ENCODE measurements at regions of chr9 and their contacts with region 1.

Region 1: DNA sequence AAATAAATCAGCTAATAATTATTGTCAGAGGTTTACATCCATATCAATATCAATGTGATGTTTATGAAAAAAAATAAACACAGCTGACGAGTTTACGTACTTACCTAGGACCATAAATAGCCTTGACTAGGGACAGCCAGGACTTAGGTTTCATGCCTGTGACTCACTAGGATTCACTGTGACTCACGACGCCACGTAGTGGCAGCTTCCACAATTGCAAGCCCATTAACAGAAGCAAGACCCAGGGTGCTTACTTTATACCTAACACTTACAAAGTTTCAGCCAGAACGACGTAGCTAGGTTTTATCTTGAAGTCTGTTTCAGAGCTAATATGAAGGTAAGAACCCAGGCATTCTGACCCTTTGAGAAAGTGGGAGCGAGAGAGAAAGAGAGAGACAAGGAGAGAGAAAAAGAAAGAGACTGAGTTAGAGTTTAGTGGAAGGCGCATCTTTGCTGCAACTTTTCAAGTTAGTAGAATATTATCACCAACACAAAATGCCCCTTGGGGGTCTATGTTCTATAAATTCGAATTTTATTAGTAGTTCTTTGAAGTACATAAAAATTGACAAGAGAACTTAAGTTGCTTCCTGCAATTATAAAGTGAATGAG is 191.2 kb downstream of the GNA14 start:
- DNase-seq: peak; percentile 87 to 90
- ATAC-seq: peak; percentile 81 to 89
- H3K4me3 ChIP-seq: no peak overlapping the region
- H3K27ac ChIP-seq: no peak overlapping the region
- H3K4me1 ChIP-seq: no peaks in the 10 kb centered on the region
- CTCF ChIP-seq: peak; percentile 69
- EP300 ChIP-seq: no peak
- POLR2A ChIP-seq: no peak
- RAD21 ChIP-seq: peak; percentile 38 to 39; a peak in 4 of 5 replicates

Region 2: DNA sequence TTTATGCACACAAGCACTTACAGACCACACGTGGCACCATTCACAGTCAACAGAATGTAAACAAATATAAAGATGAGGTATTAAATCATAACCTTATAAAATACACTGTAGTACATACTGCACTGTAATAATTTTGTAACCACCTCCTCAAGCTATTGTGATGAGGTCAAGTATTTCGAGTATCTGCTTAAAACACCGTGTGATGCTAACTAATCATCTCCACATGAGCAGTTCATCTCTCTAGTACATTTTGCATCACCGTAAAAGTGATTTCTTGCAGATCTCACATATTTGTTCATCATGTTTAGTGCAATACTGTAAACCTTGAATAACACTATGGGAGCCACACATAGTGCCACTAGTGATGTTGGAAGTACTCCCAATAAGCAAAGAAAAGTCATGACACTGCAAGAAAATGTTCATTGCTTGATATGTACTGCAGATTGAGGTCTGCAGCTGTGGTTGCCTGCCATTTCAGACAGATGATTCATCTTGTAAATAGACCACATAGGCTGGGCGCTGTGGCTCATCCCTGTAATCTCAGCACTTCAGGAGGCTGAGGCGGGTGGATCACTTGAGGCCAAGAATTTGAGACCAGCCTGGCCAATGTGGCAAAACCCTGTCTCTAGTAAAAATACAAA is 393.2 kb before region 1 on chr9:
- CTCF ChIA-PET with region 1: no interaction called
- POLR2A ChIA-PET with region 1: no interaction called
- DNase-seq: peak in 1 of 2 experiments; percentile 74
- ATAC-seq: peak; percentile 90 to 97
- H3K4me3 ChIP-seq: no peak overlapping the region
- H3K27ac ChIP-seq: peak overlapping the region; percentile 54 to 56; a peak in 4 of 6 replicates
- H3K4me1 ChIP-seq: peaks cover 11% of the 10 kb centered on the region; the same call in 2 of the 3 replicates
- CTCF ChIP-seq: no peak
- EP300 ChIP-seq: no peak
- POLR2A ChIP-seq: no peak
- RAD21 ChIP-seq: no peak

Region 3: DNA sequence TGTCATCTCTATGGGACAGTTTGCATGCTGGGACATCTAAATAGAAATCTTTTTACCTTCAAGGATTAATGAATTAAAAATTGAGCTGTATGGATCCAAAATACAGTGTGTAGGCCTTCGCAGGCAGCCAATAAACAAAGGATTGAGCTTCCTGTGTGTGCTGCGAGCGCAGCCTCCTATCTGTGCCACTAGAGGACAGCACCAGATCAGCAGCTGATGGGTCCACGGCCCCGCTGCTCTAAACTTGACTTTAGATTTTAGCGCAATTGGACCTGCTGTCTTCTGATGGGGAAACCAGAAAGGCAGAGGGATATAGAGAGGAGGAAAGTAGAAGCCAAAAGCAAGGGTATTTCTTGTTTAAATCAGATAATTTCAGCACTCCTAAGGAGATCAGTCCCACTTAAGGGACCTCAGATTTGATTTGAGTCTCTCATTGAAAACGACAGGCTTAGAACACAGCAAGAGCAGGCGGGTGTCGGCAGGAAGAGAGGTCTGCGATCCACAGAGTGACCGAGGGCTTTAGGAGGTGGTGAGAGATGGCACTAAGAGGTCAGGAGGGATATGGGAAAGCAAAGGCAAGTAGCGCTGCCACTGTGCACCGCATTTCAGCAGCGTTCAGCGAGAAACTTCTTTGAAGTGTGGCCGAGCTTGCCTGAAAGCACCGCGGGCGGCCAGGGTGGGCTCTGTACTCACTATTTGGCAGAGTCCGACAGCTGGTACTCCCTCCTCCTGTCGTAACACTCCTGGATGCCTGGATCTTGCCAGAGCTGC is 23.1 kb before region 1 on chr9:
- CTCF ChIA-PET with region 1: interaction called, 238 read pairs
- POLR2A ChIA-PET with region 1: no interaction called
- DNase-seq: peak; percentile 67 to 85
- ATAC-seq: peak; percentile 92 to 98
- H3K4me3 ChIP-seq: no peak overlapping the region
- H3K27ac ChIP-seq: no peak overlapping the region
- H3K4me1 ChIP-seq: no peaks in the 10 kb centered on the region
- CTCF ChIP-seq: peak; percentile 96
- EP300 ChIP-seq: no peak
- POLR2A ChIP-seq: no peak
- RAD21 ChIP-seq: peak; percentile 94 to 95

Region 4: GRCh38 chr9:77475641-77476473 is 18.9 kb after region 1 on chr9:
- CTCF ChIA-PET with region 1: interaction called, 23 read pairs
- POLR2A ChIA-PET with region 1: no interaction called
- DNase-seq: no peak
- ATAC-seq: peak in 1 of 2 experiments; percentile 19; a peak in 1 of 6 replicates
- H3K4me3 ChIP-seq: no peak overlapping the region
- H3K27ac ChIP-seq: no peak overlapping the region
- H3K4me1 ChIP-seq: no peaks in the 10 kb centered on the region
- CTCF ChIP-seq: no peak
- EP300 ChIP-seq: no peak
- POLR2A ChIP-seq: no peak
- RAD21 ChIP-seq: no peak

Region 5: DNA sequence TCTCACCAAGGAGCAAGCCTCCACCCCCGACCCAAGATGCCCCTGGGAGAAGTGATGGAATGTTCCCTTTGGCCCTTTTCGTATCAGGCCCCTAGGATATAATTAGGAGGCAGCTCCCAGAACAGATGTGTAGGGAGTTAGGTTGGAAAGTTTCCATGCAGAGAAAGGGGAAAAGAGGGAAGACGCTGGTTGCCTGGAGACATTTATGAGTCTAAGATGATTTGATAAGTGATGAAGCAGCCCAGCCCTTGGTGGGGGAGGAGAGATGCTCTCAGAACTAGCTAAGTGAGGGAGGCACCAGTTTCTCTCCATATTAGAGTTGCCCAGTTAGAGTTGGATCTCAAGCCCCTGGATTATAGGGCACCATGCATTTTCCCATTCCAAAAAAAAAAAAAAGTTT is 53.7 kb after region 1 on chr9:
- CTCF ChIA-PET with region 1: interaction called, 10 read pairs
- POLR2A ChIA-PET with region 1: no interaction called
- DNase-seq: no peak
- ATAC-seq: no peak
- H3K4me3 ChIP-seq: no peak overlapping the region
- H3K27ac ChIP-seq: no peak overlapping the region
- H3K4me1 ChIP-seq: peaks cover 26% of the 10 kb centered on the region
- CTCF ChIP-seq: no peak
- EP300 ChIP-seq: no peak
- POLR2A ChIP-seq: no peak
- RAD21 ChIP-seq: no peak

Region 6: GRCh38 chr9:77751341-77752091 is 294.6 kb after region 1 on chr9:
- CTCF ChIA-PET with region 1: interaction called, 161 read pairs
- POLR2A ChIA-PET with region 1: no interaction called
- DNase-seq: peak; percentile 13 to 58
- ATAC-seq: peak; percentile 88 to 95
- H3K4me3 ChIP-seq: no peak overlapping the region
- H3K27ac ChIP-seq: no peak overlapping the region
- H3K4me1 ChIP-seq: 0 out of 3 replicates have a peak, but pooled peaks cover 6% of the 10 kb centered on the region
- CTCF ChIP-seq: peak; percentile 86
- EP300 ChIP-seq: no peak
- POLR2A ChIP-seq: no peak
- RAD21 ChIP-seq: peak; percentile 86 to 87

Measured in A549 (cell line).